Right cardiac atrium (tissue), 5 donors: ENCODE measurements at regions of chr13 and their contacts with region 1.

Region 1: GRCh38 chr13:28489524-28489931 is 5.4 kb downstream of the FLT1 start:
- DNase-seq: no peak
- ATAC-seq: no peak
- H3K4me3 ChIP-seq: peak overlapping the region; percentile 7
- H3K27ac ChIP-seq: no peak overlapping the region
- H3K4me1 ChIP-seq: peaks cover 9% of the 10 kb centered on the region
- H3K27me3 ChIP-seq: no peaks in the 10 kb centered on the region

Region 2: GRCh38 chr13:28329395-28330158 is 160.0 kb before region 1 on chr13:
- intact Hi-C with region 1: loop called in 1 of 4 experiments (anchors 10 kb)
- DNase-seq: peak; percentile 52 to 72 (median 62)
- ATAC-seq: peak; percentile 84 to 96
- H3K4me3 ChIP-seq: no peak overlapping the region
- H3K27ac ChIP-seq: no peak overlapping the region
- H3K4me1 ChIP-seq: peaks cover 3% of the 10 kb centered on the region
- H3K27me3 ChIP-seq: no peaks in the 10 kb centered on the region

Region 3: DNA sequence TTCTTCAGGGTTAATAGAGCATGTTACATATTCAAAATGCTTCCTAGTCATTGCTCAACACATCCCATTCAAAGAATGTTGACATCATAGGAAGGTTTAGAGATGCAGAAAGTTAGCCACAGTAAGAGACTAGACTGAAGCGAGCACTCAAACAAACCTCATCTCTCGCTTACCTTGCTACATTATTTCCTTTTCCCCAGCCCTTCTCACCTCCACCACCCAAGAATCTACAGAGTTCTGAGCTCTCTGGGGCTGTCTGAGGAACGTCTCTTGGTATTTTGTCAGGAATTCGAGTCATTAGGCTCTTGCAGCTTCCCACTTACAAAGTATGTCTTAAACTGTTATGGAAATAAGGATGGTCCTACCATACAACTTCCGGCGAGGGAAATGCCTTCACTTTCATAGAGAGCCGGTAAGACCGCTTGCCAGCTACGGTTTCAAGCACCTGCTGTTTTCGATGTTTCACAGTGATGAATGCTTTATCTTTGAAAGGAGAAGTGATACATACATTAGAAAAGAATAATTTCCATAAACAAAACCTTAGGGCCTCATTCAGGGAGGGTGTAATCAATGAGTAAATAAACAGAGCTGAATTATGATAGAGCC is 59.7 kb before region 1 on chr13:
- intact Hi-C with region 1: no loop called
- DNase-seq: no peak
- ATAC-seq: no peak
- H3K4me3 ChIP-seq: no peak overlapping the region
- H3K27ac ChIP-seq: no peak overlapping the region
- H3K4me1 ChIP-seq: no peaks in the 10 kb centered on the region
- H3K27me3 ChIP-seq: no peaks in the 10 kb centered on the region

Region 4: GRCh38 chr13:28671126-28671792 is 181.7 kb after region 1 on chr13:
- intact Hi-C with region 1: no loop called
- DNase-seq: no peak
- ATAC-seq: no peak
- H3K4me3 ChIP-seq: no peak overlapping the region
- H3K27ac ChIP-seq: no peak overlapping the region
- H3K4me1 ChIP-seq: peaks cover 2% of the 10 kb centered on the region
- H3K27me3 ChIP-seq: no peaks in the 10 kb centered on the region